Left ventricle myocardium superior (tissue), 1 donor: ENCODE measurements at regions of chr5 and their contacts with region 1.

Region 1: DNA sequence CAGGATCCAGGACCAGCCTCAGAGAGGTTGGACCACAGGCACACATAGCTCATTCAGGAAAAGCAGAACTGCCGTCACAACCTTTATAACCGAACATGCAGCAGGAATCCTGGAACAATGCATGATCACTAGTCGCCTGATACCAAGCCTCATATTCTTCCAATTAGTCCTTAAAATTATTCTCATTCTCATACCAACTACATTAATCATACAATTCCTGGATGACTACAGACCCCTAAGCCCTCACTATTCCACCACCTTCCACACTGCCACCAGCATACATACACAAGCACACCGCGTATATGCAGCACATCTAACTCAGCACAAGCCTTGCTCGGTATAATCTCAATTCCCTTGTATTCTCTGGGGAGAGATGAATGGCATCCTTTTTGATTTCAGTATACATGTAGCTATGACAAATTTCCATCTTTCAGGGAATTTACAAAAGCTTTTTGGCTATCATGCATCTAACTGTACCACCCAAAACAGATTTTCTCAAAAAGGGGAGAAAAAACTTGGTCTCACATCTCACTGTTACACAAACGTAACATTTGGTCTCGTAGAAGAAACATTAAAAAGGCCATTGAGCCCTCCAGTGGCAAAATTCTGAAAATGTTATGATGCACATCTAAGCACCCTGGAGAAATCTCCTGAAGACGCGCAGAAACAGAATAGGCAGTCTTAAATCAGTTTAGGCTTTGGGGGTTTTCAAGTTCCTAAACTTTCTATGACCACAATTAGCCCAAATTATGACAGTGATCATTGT is 46.2 kb downstream of the MCTP1 start:
- DNase-seq: no peak
- ATAC-seq: no peak

Region 2: GRCh38 chr5:94968507-94969095 is 270.1 kb before region 1 on chr5:
- intact Hi-C with region 1: loop called (anchors 2 kb)
- DNase-seq: no peak
- ATAC-seq: peak; percentile 51